ENCODE measurements at regions of chr2 and their contacts with region 1.

Region 1: GRCh38 chr2:237633061-237633561 is 5.7 kb downstream of the LRRFIP1 start:
- DNase-seq: no peak
- ATAC-seq: no peak
- H3K4me3 ChIP-seq: no peak overlapping the region
- H3K27ac ChIP-seq: peak overlapping the region; percentile 19 to 95
- H3K4me1 ChIP-seq: peaks cover 4 to 12% of the 10 kb centered on the region in 2 donors
- H3K27me3 ChIP-seq: no peaks in the 10 kb centered on the region

Region 2: GRCh38 chr2:237616734-237617586 is 16.2 kb before region 1 on chr2:
- intact Hi-C with region 1: no loop called
- DNase-seq: no peak
- ATAC-seq: peak; percentile 80
- H3K4me3 ChIP-seq: no peak overlapping the region
- H3K27ac ChIP-seq: peak overlapping the region; percentile 87 to 98
- H3K4me1 ChIP-seq: peaks cover 0 to 12% of the 10 kb centered on the region in 2 donors
- H3K27me3 ChIP-seq: no peaks in the 10 kb centered on the region

Region 3: GRCh38 chr2:237651761-237652160 is 18.6 kb after region 1 on chr2:
- intact Hi-C with region 1: loop called in 1 of 2 experiments (anchors 2 kb)
- DNase-seq: no peak
- ATAC-seq: no peak
- H3K4me3 ChIP-seq: no peak overlapping the region
- H3K27ac ChIP-seq: no peak overlapping the region
- H3K4me1 ChIP-seq: peaks cover 3 to 7% of the 10 kb centered on the region in 2 donors
- H3K27me3 ChIP-seq: no peaks in the 10 kb centered on the region